ENCODE measurements at regions of chr16 and their contacts with region 1.

Region 1: DNA sequence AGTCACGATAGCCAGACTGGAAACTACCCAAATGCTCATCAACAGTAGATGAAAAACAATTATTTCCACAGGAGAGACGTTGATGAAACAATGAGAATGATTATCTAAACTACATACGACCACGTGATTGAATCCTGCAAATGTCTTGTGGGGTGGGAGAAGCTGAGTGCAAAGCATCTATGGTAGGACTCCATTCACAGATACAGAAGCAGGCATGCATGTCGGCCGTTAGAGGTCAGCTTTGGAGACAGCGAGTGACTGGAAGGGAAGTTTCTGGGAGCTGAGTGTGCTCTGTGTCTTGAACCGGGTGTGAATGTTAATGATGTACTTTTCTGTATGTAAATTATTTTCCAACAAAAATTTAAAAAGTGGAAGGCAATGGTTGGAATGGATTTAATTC is 71.5 kb upstream of the DNAJA2 start:
- DNase-seq: no peak
- H3K4me3 Mint-ChIP-seq: no peak overlapping the region
- H3K27ac Mint-ChIP-seq: no peak overlapping the region
- H3K4me1 Mint-ChIP-seq: peaks cover 16% of the 10 kb centered on the region
- H3K27me3 Mint-ChIP-seq: no peaks in the 10 kb centered on the region

Region 2: GRCh38 chr16:47460711-47461597 is 415.9 kb after region 1 on chr16 and contains the starts of genes ITFG1 and PHKB:
- CTCF ChIA-PET with region 1: no interaction called
- intact Hi-C with region 1: loop called (anchors 10 kb)
- DNase-seq: peak; percentile 93
- H3K4me3 Mint-ChIP-seq: peak within 1 kb of the TSS; percentile 92
- H3K27ac Mint-ChIP-seq: peak within 1 kb of the TSS; percentile 88
- H3K4me1 Mint-ChIP-seq: peaks cover 58% of the 10 kb centered on the region
- H3K27me3 Mint-ChIP-seq: no peaks in the 10 kb centered on the region
- total RNA-seq, gene ITFG1: 17.6 to 18.3 TPM
- total RNA-seq, gene PHKB: 22.5 to 25.3 TPM

Measured in activated naive CD4-positive, alpha-beta T cell treated with anti-CD3 and anti-CD28 coated beads for 36 hours (primary cell).